Natural killer cell (primary cell): ENCODE measurements at regions of chr5 and their contacts with region 1.

Region 1: DNA sequence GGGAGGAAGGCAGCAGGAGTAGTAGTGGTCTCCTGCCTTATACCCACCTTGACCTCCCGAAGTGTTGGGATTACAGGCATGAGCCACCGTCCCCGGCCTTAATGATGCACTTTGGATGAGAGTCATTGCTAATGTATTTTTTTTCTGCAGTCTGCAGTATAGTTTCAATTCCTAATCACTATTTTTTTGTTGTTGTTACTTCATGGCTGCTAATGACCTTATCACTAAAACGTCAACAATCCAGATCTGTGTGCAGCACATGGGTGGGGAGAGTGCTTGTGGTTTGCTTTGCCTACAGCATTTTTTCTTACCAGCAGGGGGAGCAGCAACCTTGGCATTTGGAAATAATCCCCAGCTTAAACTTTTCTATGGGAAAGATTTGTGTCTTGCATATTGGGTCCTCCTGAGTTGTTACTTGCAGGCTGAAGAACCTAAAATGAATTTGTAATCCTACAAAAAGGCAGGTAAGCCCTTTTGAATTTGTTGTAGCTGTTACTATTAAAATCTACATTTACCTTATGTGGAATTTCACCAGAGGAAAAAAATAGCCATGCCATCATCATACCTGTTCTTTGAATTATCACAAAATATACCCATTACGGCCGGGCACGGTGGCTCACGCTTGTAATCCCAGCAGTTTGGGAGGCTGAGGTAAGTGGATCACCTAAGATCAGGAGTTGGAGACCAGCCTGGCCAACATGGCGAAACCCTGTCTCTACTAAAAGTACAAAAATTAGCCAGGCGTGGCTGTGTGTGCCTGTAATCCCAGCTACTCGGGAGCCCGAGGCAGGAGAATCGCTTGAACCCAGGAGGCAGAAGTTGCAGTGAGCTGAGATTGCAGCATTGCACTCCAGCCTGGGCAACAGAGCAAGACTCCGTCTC is 6.3 kb upstream of the MED7 start:
- DNase-seq: peak; percentile 66 to 93
- ATAC-seq: peak; percentile 95 to 97 (median 97)
- H3K4me3 ChIP-seq: no peak overlapping the region
- H3K4me3 Mint-ChIP-seq: no peak overlapping the region
- H3K27ac ChIP-seq: no peak overlapping the region
- H3K27ac Mint-ChIP-seq: peak overlapping the region; percentile 88 to 93
- H3K4me1 ChIP-seq: peaks cover 8% of the 10 kb centered on the region
- H3K4me1 Mint-ChIP-seq: peaks cover 16 to 19% of the 10 kb centered on the region in 2 donors
- H3K27me3 ChIP-seq: no peaks in the 10 kb centered on the region
- H3K27me3 Mint-ChIP-seq: no peaks in the 10 kb centered on the region
- CTCF ChIP-seq: peak; percentile 86

Region 2: DNA sequence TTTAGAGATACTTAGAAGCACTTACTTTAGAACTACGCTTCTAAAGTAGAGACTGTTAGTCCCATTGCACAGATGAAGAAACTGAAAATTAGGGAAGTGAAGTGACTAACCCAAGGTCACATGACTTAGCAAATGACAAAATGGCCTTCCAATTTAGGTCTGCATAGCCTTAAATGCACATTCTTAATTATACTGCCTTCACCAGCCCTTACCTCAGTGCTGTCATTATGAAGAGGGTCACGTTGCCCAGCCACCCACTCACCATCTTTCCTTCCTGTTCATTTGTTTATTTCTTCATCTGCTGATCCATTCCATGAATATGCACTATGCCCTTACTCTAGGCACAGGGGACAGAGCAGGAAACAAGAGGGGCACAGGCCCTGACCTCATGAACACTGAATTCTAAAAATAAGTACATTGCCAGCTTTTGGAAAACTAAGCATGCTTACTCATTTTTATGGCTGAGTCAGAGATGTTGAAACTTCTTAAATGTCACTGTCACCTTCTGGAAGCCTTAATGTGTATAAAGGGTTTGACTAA is 48.8 kb before region 1 on chr5:
- intact Hi-C with region 1: no loop called
- DNase-seq: no peak
- ATAC-seq: peak in 2 of 3 donors; percentile 5 to 34
- H3K4me3 ChIP-seq: no peak overlapping the region
- H3K4me3 Mint-ChIP-seq: no peak overlapping the region
- H3K27ac ChIP-seq: no peak overlapping the region
- H3K27ac Mint-ChIP-seq: peak overlapping the region; percentile 81 to 95
- H3K4me1 ChIP-seq: peaks cover 2% of the 10 kb centered on the region
- H3K4me1 Mint-ChIP-seq: peaks cover 30 to 38% of the 10 kb centered on the region in 2 donors
- H3K27me3 ChIP-seq: no peaks in the 10 kb centered on the region
- H3K27me3 Mint-ChIP-seq: no peaks in the 10 kb centered on the region
- CTCF ChIP-seq: no peak

Region 3: DNA sequence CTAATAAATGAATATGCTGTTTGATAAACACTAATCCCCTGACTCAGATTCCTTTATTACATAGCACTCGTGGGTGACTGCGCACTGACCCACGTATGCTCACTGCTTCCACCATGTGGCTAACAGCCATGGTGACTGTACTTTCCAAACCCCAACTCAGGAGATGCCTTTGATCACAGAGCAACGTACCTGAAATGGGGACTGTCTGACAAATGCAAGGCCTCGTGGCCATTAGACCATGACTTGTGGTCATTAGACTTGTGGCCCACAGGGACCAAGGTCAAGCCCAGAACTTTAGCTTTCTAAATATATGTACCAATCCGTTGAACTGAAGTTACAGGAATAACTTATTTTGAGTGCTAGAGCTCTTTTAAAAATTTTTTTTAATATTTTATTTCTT is 163.5 kb after region 1 on chr5:
- intact Hi-C with region 1: loop called (anchors 1 kb)
- DNase-seq: peak; percentile 50 to 88
- ATAC-seq: peak; percentile 88 to 98 (median 90)
- H3K4me3 ChIP-seq: no peak overlapping the region
- H3K4me3 Mint-ChIP-seq: no peak overlapping the region
- H3K27ac ChIP-seq: peak overlapping the region; percentile 27
- H3K27ac Mint-ChIP-seq: peak overlapping the region; percentile 81 to 90
- H3K4me1 ChIP-seq: peaks cover 29% of the 10 kb centered on the region
- H3K4me1 Mint-ChIP-seq: peaks cover 16 to 25% of the 10 kb centered on the region in 2 donors
- H3K27me3 ChIP-seq: no peaks in the 10 kb centered on the region
- H3K27me3 Mint-ChIP-seq: no peaks in the 10 kb centered on the region
- CTCF ChIP-seq: peak; percentile 74